Activated CD4-positive, alpha-beta T cell treated with anti-CD3 and anti-CD28 coated beads for 36 hours (primary cell): ENCODE measurements at regions of chr12 and their contacts with region 1.

Region 1: GRCh38 chr12:79927772-79928474 is 7.0 kb downstream of the PPP1R12A start:
- DNase-seq: peak; percentile 61
- ATAC-seq: peak; percentile 99
- H3K4me3 Mint-ChIP-seq: no peak overlapping the region
- H3K27ac Mint-ChIP-seq: peak overlapping the region; percentile 61
- H3K4me1 Mint-ChIP-seq: peaks cover 64% of the 10 kb centered on the region
- H3K27me3 Mint-ChIP-seq: no peaks in the 10 kb centered on the region

Region 2: GRCh38 chr12:79911889-79912656 is 15.8 kb before region 1 on chr12:
- CTCF ChIA-PET with region 1: interaction called, 15 read pairs
- POLR2A ChIA-PET with region 1: no interaction called
- intact Hi-C with region 1: loop called in 1 of 2 experiments (anchors 2 kb)
- DNase-seq: no peak
- ATAC-seq: no peak
- H3K4me3 Mint-ChIP-seq: no peak overlapping the region
- H3K27ac Mint-ChIP-seq: no peak overlapping the region
- H3K4me1 Mint-ChIP-seq: peaks cover 59% of the 10 kb centered on the region
- H3K27me3 Mint-ChIP-seq: no peaks in the 10 kb centered on the region